CD14-positive monocyte (primary cell): ENCODE measurements at regions of chr16 and their contacts with region 1.

Region 1: DNA sequence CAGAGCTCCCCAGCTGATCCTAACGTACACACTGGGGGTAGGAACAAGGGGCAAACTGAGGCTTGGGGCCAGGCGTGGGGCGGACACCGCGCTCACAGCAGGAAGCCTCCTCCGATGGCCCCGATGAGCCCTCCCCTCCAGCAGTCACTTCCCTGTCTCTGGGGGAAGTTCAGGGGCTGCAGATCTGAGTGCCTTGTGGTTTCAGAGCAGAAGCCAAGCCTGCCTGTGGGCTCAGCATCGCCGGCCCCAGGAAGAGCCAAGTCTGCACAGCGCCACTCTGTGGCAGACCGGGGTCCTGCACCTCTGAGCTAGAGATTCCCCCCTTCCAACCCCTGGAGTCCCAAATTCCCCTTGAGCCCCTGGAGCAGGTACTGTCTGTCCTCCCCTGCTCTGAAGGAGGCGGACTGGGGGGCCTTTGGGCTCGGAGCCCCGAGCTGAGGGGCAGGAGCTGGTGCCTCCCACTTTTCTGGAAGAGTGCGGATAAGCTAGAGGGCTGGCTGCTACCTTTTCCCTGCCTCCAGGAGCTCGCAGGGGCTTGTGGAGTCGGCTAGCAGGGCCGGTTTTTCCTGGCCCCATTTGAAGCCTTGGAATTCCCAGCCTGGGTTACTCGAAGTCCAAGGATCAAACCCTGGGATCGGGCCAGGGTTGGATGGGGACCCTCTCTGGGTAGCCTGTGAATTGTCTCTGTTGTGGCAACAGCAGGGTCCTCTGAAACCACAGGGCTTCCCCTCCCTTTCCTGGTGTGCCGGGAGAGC is 2.9 kb downstream of the GSE1 start:
- DNase-seq: peak; percentile 91 to 94 (median 93)
- H3K4me3 ChIP-seq: peak overlapping the region; percentile 1 to 84 (median 28)
- H3K4me3 Mint-ChIP-seq: peak overlapping the region; percentile 94 to 98
- H3K27ac ChIP-seq: peak overlapping the region; percentile 88 to 93
- H3K27ac Mint-ChIP-seq: peak overlapping the region; percentile 93 to 98 (median 97)
- H3K4me1 ChIP-seq: peaks cover 52 to 68% of the 10 kb centered on the region in 2 donors
- H3K4me1 Mint-ChIP-seq: peaks cover 41% of the 10 kb centered on the region
- H3K27me3 ChIP-seq: no peaks in the 10 kb centered on the region
- H3K27me3 Mint-ChIP-seq: peaks cover 0 to 9% (median 0%) of the 10 kb centered on the region in 3 donors
- CTCF ChIP-seq: peak; percentile 98

Region 2: GRCh38 chr16:85437166-85438055 is 178.6 kb before region 1 on chr16:
- intact Hi-C with region 1: no loop called
- DNase-seq: peak in 1 of 3 donors; percentile 13
- H3K4me3 ChIP-seq: no peak overlapping the region
- H3K4me3 Mint-ChIP-seq: peak overlapping the region in 1 of 2 donors; percentile 4
- H3K27ac ChIP-seq: no peak overlapping the region
- H3K27ac Mint-ChIP-seq: no peak overlapping the region
- H3K4me1 ChIP-seq: peaks cover 9 to 10% of the 10 kb centered on the region in 2 donors
- H3K4me1 Mint-ChIP-seq: peaks cover 10% of the 10 kb centered on the region
- H3K27me3 ChIP-seq: no peaks in the 10 kb centered on the region
- H3K27me3 Mint-ChIP-seq: peaks cover 2 to 6% (median 4%) of the 10 kb centered on the region in 3 donors
- CTCF ChIP-seq: no peak

Region 3: DNA sequence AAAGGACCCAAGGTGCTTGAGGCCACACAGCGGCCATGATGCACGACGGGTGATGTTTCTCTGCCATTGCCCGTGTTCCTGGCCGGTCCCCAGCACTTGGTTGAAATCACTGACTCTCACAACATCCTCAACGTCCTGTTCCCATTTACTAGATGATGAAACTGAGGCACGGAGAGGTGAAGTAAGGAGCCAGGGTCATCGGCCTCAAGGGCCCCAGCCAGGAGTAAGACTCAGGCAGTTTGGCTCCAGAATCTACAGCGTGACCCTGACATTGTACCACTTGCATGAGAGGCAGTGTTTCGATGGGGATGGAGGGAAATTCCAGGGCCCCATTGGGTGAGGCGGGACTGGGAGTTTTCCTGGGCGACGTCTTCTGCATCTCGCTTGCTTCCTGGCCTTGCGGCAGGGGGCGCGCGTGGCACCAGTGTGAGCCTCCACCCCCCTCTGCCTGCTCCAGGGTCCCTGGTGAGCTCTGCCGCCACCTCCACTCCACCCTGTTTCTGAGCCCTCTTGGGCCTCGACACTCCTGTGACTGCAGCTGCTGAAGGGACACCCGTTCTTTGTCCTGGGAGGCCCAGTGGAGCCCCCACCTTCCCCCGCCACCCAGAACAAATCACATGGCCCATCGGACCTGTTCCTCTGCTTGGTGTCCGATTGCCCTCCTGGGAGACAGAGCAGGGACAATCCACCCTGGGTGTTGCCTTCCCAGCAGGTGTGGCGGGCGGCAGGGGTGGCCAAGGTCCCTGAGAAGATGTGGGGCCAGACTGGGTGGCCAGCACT is 135.9 kb before region 1 on chr16:
- intact Hi-C with region 1: loop called in 1 of 2 experiments (anchors 5 kb)
- DNase-seq: peak in 1 of 3 donors; percentile 32
- H3K4me3 ChIP-seq: no peak overlapping the region
- H3K4me3 Mint-ChIP-seq: no peak overlapping the region
- H3K27ac ChIP-seq: no peak overlapping the region
- H3K27ac Mint-ChIP-seq: no peak overlapping the region
- H3K4me1 ChIP-seq: no peaks in the 10 kb centered on the region
- H3K4me1 Mint-ChIP-seq: peaks cover 4% of the 10 kb centered on the region
- H3K27me3 ChIP-seq: no peaks in the 10 kb centered on the region
- H3K27me3 Mint-ChIP-seq: peaks cover 6 to 7% (median 6%) of the 10 kb centered on the region in 3 donors
- CTCF ChIP-seq: peak; percentile 33

Region 4: DNA sequence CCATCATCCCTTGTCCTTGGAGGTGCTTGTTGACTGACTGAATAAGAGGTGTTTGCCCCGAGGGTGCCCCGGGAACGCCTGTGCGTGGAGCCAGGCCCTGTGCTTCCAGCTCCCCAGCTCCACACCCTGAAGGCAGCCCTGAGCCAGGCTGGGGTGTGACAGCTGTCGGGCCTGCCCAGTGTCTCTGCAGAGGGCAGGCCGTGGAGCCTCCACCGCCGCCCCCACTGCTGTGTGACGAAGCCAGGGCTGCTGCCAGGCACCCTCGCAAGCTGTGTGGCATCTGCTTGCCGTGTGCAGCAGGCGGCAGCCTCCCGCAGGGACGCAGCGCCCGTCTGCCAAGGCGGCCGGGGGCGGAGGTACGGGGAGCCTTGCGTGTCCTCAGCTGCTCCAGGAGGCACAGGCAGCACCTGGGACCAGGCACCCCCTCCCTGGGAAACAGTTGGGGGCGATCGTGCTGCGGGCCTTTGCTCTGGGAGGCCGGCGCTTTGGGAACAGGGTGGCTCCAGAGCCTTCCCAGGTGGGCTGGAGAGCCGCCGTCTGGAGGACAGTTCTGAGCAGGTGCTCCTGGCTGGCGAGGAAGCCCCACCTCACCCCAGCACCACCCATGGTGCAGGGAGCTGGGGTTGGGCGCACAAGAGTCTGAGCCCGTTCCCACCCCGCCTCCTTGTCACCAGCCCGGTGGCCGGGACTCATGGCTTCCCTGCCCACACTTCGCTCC is 23.7 kb after region 1 on chr16:
- intact Hi-C with region 1: no loop called
- DNase-seq: no peak
- H3K4me3 ChIP-seq: no peak overlapping the region
- H3K4me3 Mint-ChIP-seq: no peak overlapping the region
- H3K27ac ChIP-seq: no peak overlapping the region
- H3K27ac Mint-ChIP-seq: peak overlapping the region in 1 of 7 donors; percentile 13
- H3K4me1 ChIP-seq: peaks cover 31 to 32% of the 10 kb centered on the region in 2 donors
- H3K4me1 Mint-ChIP-seq: peaks cover 34% of the 10 kb centered on the region
- H3K27me3 ChIP-seq: no peaks in the 10 kb centered on the region
- H3K27me3 Mint-ChIP-seq: no peaks in the 10 kb centered on the region
- CTCF ChIP-seq: no peak

Region 5: GRCh38 chr16:85688586-85689284 is 72.7 kb after region 1 on chr16 and contains the start of gene GINS2:
- intact Hi-C with region 1: loop called in 1 of 2 experiments (anchors 5 kb)
- DNase-seq: peak; percentile 83 to 88 (median 87)
- H3K4me3 ChIP-seq: peak within 1 kb of the TSS; percentile 40 to 77 (median 76)
- H3K4me3 Mint-ChIP-seq: peak within 1 kb of the TSS; percentile 75 to 82
- H3K27ac ChIP-seq: no peak within 1 kb of the TSS
- H3K27ac Mint-ChIP-seq: peak within 1 kb of the TSS in 1 of 7 donors; percentile 55
- H3K4me1 ChIP-seq: peaks cover 16 to 22% of the 10 kb centered on the region in 2 donors
- H3K4me1 Mint-ChIP-seq: peaks cover 23% of the 10 kb centered on the region
- H3K27me3 ChIP-seq: no peaks in the 10 kb centered on the region
- H3K27me3 Mint-ChIP-seq: peaks cover 13 to 15% (median 13%) of the 10 kb centered on the region in 3 donors
- CTCF ChIP-seq: no peak
- polyA plus RNA-seq, gene GINS2: 0.13 to 0.28 TPM in 2 of 3 donors, not detected in the other